ENCODE measurements at regions of chr12 and their contacts with region 1.

Region 1: DNA sequence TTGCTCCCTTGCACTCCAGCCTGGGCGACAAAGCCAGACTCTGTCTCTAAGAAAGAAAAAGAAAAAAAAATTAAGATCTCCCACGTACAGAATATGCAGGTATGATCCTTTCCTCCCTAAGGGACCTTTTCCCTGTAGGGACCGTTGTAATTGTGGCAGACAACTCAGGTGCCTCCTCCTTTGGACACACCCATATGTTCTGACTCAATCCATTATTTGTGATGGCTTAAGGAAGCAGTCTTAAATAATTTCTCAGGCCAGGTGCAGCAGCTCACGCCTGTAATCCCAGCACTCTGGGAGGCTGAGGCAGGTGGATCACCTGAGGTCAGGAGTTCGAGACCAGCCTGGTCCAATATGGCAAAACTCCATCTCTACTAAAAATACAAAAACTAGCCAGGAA is 53.1 kb downstream of the TMCC3 start:
- DNase-seq: no peak
- ATAC-seq: no peak
- H3K4me3 ChIP-seq: no peak overlapping the region
- H3K4me3 Mint-ChIP-seq: no peak overlapping the region
- H3K27ac ChIP-seq: no peak overlapping the region
- H3K27ac Mint-ChIP-seq: no peak overlapping the region
- H3K4me1 ChIP-seq: no peaks in the 10 kb centered on the region
- H3K4me1 Mint-ChIP-seq: peaks cover 0 to 7% (median 0%) of the 10 kb centered on the region in 7 donors
- H3K27me3 ChIP-seq: no peaks in the 10 kb centered on the region
- H3K27me3 Mint-ChIP-seq: peaks cover 0 to 17% (median 0%) of the 10 kb centered on the region in 5 donors

Region 2: DNA sequence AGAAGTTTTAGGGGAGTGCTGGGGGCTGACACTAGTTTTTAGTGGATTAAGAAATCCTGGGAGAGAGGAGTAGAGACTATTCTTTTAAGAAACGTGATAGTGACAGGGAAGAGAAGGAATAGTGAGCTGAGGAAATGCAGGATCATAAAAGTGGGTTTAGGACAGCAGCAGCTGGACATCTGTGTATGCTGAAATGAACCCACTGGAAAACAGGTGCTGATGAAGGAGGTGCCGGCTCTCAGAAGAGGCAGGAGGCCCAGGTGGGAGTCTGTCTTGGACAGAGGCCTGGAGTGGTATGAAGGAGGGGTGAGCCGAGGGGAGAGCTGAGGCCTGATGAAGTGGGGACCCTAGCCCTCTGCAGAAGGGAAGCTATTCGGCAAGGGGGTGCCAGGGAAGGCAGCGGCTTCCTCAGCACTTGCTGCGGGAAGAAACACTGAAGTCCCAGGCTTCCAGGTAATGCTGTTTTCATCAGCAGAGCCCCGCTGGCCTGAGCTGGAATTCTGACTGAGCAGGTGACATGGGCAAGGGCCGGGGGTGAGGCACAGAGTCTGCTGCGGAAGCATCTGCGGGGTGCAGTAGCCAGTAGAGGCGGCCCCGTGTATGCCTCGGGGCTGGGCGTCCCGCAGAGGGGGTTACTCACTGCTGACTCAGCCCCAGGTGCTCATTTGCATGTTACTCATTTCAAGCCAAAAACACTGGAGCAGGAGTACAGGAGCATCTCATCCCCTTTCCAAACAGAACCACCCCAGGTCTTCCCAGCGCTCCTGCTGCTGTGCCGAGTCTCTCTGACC is 36.6 kb before region 1 on chr12:
- CTCF ChIA-PET with region 1: no interaction called
- POLR2A ChIA-PET with region 1: no interaction called
- intact Hi-C with region 1: no loop called
- DNase-seq: no peak
- ATAC-seq: no peak
- H3K4me3 ChIP-seq: no peak overlapping the region
- H3K4me3 Mint-ChIP-seq: no peak overlapping the region
- H3K27ac ChIP-seq: no peak overlapping the region
- H3K27ac Mint-ChIP-seq: peak overlapping the region in 1 of 9 donors; percentile 22
- H3K4me1 ChIP-seq: no peaks in the 10 kb centered on the region
- H3K4me1 Mint-ChIP-seq: peaks cover 0 to 5% (median 0%) of the 10 kb centered on the region in 7 donors
- H3K27me3 ChIP-seq: no peaks in the 10 kb centered on the region
- H3K27me3 Mint-ChIP-seq: peaks cover 18 to 33% (median 20%) of the 10 kb centered on the region in 5 donors

Region 3: GRCh38 chr12:94586589-94587259 is 10.5 kb before region 1 on chr12:
- CTCF ChIA-PET with region 1: no interaction called
- POLR2A ChIA-PET with region 1: no interaction called
- intact Hi-C with region 1: no loop called
- DNase-seq: no peak
- ATAC-seq: no peak
- H3K4me3 ChIP-seq: no peak overlapping the region
- H3K4me3 Mint-ChIP-seq: no peak overlapping the region
- H3K27ac ChIP-seq: no peak overlapping the region
- H3K27ac Mint-ChIP-seq: peak overlapping the region in 1 of 9 donors; percentile 23
- H3K4me1 ChIP-seq: no peaks in the 10 kb centered on the region
- H3K4me1 Mint-ChIP-seq: peaks cover 0 to 17% (median 10%) of the 10 kb centered on the region in 7 donors
- H3K27me3 ChIP-seq: no peaks in the 10 kb centered on the region
- H3K27me3 Mint-ChIP-seq: peaks cover 0 to 9% (median 0%) of the 10 kb centered on the region in 5 donors

Region 4: GRCh38 chr12:94621664-94622359 is 24.5 kb after region 1 on chr12:
- CTCF ChIA-PET with region 1: no interaction called
- POLR2A ChIA-PET with region 1: no interaction called
- intact Hi-C with region 1: loop called in 1 of 2 experiments (anchors 1 kb)
- DNase-seq: peak in 4 of 9 donors; percentile 10 to 29 (median 15)
- ATAC-seq: peak; percentile 86
- H3K4me3 ChIP-seq: peak overlapping the region; percentile 40
- H3K4me3 Mint-ChIP-seq: peak overlapping the region; percentile 65 to 87 (median 77)
- H3K27ac ChIP-seq: no peak overlapping the region
- H3K27ac Mint-ChIP-seq: peak overlapping the region in 8 of 9 donors; percentile 37 to 88 (median 69)
- H3K4me1 ChIP-seq: peaks cover 6 to 7% of the 10 kb centered on the region in 2 donors
- H3K4me1 Mint-ChIP-seq: peaks cover 10 to 20% (median 16%) of the 10 kb centered on the region in 7 donors
- H3K27me3 ChIP-seq: no peaks in the 10 kb centered on the region
- H3K27me3 Mint-ChIP-seq: no peaks in the 10 kb centered on the region

Region 5: GRCh38 chr12:95158919-95159318 is 561.7 kb after region 1 on chr12:
- CTCF ChIA-PET with region 1: no interaction called
- POLR2A ChIA-PET with region 1: no interaction called
- intact Hi-C with region 1: no loop called
- DNase-seq: no peak
- ATAC-seq: no peak
- H3K4me3 ChIP-seq: no peak overlapping the region
- H3K4me3 Mint-ChIP-seq: no peak overlapping the region
- H3K27ac ChIP-seq: no peak overlapping the region
- H3K27ac Mint-ChIP-seq: no peak overlapping the region
- H3K4me1 ChIP-seq: no peaks in the 10 kb centered on the region
- H3K4me1 Mint-ChIP-seq: no peaks in the 10 kb centered on the region
- H3K27me3 ChIP-seq: no peaks in the 10 kb centered on the region
- H3K27me3 Mint-ChIP-seq: peaks cover 0 to 4% (median 0%) of the 10 kb centered on the region in 5 donors

Region 6: DNA sequence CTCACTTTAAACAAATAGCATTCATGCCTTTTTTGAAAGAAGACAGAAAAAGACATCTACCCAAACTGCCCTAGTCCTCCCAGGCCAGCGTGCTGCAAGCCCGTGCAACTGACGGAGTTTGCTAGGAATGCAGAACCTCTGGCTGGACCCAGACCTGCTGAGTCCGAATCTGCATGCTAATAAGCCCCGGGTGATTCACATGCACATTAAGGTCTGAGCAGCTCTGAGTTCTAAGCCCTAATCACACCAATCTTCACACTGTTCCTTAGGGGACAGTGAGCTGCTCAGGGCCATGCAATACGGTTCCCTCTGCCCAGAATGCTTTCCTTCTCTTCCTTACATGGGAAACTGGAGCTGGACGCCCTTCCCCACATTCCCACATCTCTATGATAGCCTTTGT is 1373.6 kb after region 1 on chr12:
- CTCF ChIA-PET with region 1: no interaction called
- POLR2A ChIA-PET with region 1: no interaction called
- intact Hi-C with region 1: no loop called
- DNase-seq: no peak
- ATAC-seq: no peak
- H3K4me3 ChIP-seq: no peak overlapping the region
- H3K4me3 Mint-ChIP-seq: no peak overlapping the region
- H3K27ac ChIP-seq: no peak overlapping the region
- H3K27ac Mint-ChIP-seq: no peak overlapping the region
- H3K4me1 ChIP-seq: no peaks in the 10 kb centered on the region
- H3K4me1 Mint-ChIP-seq: no peaks in the 10 kb centered on the region
- H3K27me3 ChIP-seq: no peaks in the 10 kb centered on the region
- H3K27me3 Mint-ChIP-seq: no peaks in the 10 kb centered on the region